ENCODE measurements at regions of chr11 and their contacts with region 1.

Region 1: GRCh38 chr11:63945477-63946163 is 6.8 kb downstream of the NAA40 start:
- DNase-seq: peak; percentile 64
- H3K4me3 Mint-ChIP-seq: no peak overlapping the region
- H3K27ac Mint-ChIP-seq: no peak overlapping the region
- H3K4me1 Mint-ChIP-seq: peaks cover 18% of the 10 kb centered on the region
- H3K27me3 Mint-ChIP-seq: no peaks in the 10 kb centered on the region

Region 2: GRCh38 chr11:63838678-63839507 is 106.7 kb before region 1 on chr11 and contains the start of gene MARK2:
- CTCF ChIA-PET with region 1: interaction called, 29 read pairs
- POLR2A ChIA-PET with region 1: interaction called, 3 read pairs
- DNase-seq: peak; percentile 99
- H3K4me3 Mint-ChIP-seq: peak within 1 kb of the TSS; percentile 82
- H3K27ac Mint-ChIP-seq: peak within 1 kb of the TSS; percentile 92
- H3K4me1 Mint-ChIP-seq: peaks cover 57% of the 10 kb centered on the region
- H3K27me3 Mint-ChIP-seq: no peaks in the 10 kb centered on the region
- total RNA-seq, gene MARK2: 68.3 to 69.2 TPM

Region 3: GRCh38 chr11:63961608-63962412 is 16.2 kb after region 1 on chr11:
- CTCF ChIA-PET with region 1: interaction called, 10 read pairs
- POLR2A ChIA-PET with region 1: no interaction called
- DNase-seq: peak; percentile 37
- H3K4me3 Mint-ChIP-seq: no peak overlapping the region
- H3K27ac Mint-ChIP-seq: no peak overlapping the region
- H3K4me1 Mint-ChIP-seq: peaks cover 26% of the 10 kb centered on the region
- H3K27me3 Mint-ChIP-seq: no peaks in the 10 kb centered on the region